ENCODE measurements at regions of chr17 and their contacts with region 1.

Region 1: DNA sequence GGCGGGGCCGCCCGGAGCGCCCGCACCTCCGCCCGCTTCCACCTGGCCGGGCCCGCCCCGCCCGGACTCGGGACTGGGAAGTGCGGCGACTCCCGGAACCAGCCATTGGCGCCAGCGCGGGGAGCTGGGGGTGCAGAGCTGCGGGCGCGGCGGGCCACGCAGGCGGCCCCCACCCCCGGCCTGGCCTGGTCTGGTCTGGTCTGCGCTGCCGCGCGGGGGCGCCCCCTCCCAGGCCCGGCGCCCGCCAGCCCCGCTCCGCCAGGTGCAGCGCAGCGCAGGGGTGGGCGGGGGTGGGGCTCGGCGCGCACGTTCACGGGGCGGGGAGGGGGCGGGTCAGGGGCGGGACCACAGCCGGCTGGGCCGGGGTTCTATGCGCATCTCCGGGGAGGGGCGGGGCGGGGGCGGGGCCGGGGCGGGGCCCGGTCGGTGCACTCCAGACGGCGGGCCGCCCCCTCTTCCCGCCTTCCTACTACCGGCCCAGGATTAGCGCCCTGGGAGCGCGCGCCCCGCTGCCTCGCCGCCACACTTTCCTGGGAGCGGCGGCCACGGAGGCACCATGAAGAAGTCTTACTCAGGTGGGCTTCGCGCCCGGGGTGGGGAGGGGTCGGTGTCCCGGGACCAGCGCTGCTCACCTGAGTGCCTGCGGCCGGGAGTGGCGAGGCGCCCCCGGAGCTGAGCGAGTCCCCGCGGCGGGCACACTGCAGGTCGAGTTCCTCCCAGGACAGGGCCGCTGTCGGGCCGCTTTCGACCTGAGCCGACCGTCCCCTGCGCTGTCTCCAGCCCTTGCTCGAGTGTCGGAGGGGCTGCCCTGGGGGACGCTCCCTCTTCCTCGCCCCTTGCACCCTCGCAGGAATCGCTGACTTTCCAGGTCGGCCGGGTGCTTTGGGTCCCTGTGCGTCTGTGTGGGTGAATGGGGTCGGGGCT is 140.5 kb downstream of the SEC14L1 start:
- DNase-seq: peak; percentile 72
- H3K4me3 Mint-ChIP-seq: peak overlapping the region; percentile 88
- H3K27ac Mint-ChIP-seq: peak overlapping the region; percentile 83
- H3K4me1 Mint-ChIP-seq: peaks cover 41% of the 10 kb centered on the region
- H3K27me3 Mint-ChIP-seq: no peaks in the 10 kb centered on the region
- CTCF ChIP-seq: peak; percentile 26

Region 2: GRCh38 chr17:77153472-77153871 is 127.8 kb before region 1 on chr17:
- CTCF ChIA-PET with region 1: no interaction called
- POLR2A ChIA-PET with region 1: no interaction called
- intact Hi-C with region 1: no loop called
- DNase-seq: peak; percentile 47
- H3K4me3 Mint-ChIP-seq: no peak overlapping the region
- H3K27ac Mint-ChIP-seq: no peak overlapping the region
- H3K4me1 Mint-ChIP-seq: peaks cover 10% of the 10 kb centered on the region
- H3K27me3 Mint-ChIP-seq: no peaks in the 10 kb centered on the region
- CTCF ChIP-seq: no peak

Region 3: DNA sequence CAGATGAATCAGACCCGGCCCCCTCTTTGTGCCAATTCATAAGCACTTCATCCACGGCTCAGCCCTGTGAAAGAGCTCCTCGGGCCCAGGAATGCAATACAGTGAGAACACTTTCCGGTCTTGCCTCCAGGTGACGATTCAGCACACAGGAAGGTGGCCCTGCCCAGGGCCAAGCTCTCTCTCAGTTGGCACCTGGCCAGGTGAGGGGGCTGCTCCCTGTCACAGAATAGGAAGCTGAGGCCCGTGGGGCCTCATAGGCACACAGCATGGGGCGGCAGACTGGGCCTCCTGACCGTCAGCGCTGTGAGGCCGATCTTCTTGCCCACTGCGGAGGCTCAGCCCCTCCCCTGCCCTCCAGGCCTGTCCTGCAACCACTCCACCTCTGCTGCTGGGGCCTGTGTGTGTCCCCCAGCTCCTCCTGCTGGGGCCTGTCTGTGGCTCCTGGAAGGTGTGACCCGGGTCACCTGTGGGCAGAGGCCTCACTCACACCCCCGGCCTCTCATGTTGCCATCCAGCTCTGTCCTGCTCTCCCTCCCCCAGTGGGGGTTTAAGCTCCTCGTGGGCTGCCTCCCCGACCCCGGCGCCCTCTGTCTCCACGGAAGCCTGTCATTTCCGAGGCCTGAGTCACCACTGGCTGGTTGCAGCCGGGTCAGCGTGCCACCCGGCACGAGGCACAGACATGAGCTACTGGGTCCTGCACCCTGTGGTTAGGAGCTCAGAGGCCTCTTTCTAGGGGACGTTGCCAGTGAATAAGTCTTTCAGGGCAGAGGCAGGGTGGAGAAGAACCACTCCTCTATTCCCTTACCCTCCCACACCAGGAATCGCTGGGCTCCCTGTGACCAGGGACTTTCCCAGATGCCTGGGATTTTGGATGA is 26.1 kb before region 1 on chr17:
- CTCF ChIA-PET with region 1: interaction called, 6 read pairs
- POLR2A ChIA-PET with region 1: interaction called, 82 read pairs
- intact Hi-C with region 1: loop called (anchors 1 kb)
- DNase-seq: peak; percentile 94
- H3K4me3 Mint-ChIP-seq: no peak overlapping the region
- H3K27ac Mint-ChIP-seq: peak overlapping the region; percentile 99
- H3K4me1 Mint-ChIP-seq: peaks cover 13% of the 10 kb centered on the region
- H3K27me3 Mint-ChIP-seq: no peaks in the 10 kb centered on the region
- CTCF ChIP-seq: no peak

Region 4: DNA sequence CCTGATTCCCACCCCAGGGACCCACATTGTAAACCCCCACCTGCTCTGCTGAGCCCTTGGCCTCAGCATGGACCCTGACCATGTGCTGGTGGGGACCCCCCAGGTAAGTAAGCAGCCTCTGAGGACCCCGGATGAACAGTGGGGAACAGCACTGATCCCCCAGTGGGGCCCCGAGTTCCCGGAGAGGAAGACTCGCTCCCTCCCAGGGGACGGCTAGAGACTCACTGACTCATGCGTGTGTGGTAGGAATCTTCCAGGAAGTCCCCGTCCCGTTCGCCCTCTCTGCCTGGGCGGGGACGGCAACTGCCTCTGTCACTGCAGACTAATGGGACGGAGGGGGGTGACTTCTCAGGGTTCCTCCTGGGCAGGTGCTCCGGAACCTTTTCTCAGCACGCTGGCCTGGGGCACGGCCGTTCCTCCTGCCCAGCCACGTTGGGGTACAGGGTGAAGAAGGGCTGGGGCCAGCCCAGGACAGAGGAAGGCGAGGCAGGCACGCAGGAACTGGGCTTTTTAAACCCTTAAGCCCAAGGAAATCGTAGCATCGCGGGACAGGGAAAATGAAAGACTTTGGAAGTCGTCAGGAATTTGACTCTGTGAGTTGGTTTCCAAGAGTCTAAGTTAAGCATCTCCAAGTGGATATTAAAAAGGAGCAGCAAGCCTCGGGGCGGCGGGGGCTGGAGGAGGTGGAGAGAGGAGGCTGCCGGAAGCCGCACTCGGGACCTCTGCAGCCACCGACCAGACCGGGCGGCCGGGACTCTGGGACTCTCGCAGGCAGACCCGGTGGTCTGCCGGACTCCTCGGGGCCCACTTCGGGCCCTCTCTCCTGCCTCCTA is 38.2 kb after region 1 on chr17:
- CTCF ChIA-PET with region 1: interaction called, 7 read pairs
- POLR2A ChIA-PET with region 1: interaction called, 443 read pairs
- intact Hi-C with region 1: no loop called
- DNase-seq: peak; percentile 90
- H3K4me3 Mint-ChIP-seq: peak overlapping the region; percentile 88
- H3K27ac Mint-ChIP-seq: peak overlapping the region; percentile 89
- H3K4me1 Mint-ChIP-seq: peaks cover 46% of the 10 kb centered on the region
- H3K27me3 Mint-ChIP-seq: no peaks in the 10 kb centered on the region
- CTCF ChIP-seq: no peak

Region 5: GRCh38 chr17:77331301-77331864 is 50.1 kb after region 1 on chr17:
- CTCF ChIA-PET with region 1: interaction called, 4 read pairs
- POLR2A ChIA-PET with region 1: interaction called, 443 read pairs
- intact Hi-C with region 1: no loop called
- DNase-seq: peak; percentile 89
- H3K4me3 Mint-ChIP-seq: peak overlapping the region; percentile 48
- H3K27ac Mint-ChIP-seq: peak overlapping the region; percentile 46
- H3K4me1 Mint-ChIP-seq: peaks cover 33% of the 10 kb centered on the region
- H3K27me3 Mint-ChIP-seq: no peaks in the 10 kb centered on the region
- CTCF ChIP-seq: peak; percentile 97

Measured in MCF 10A (cell line).